GM12878 (cell line): ENCODE measurements at regions of chr10 and their contacts with region 1.

Region 1: DNA sequence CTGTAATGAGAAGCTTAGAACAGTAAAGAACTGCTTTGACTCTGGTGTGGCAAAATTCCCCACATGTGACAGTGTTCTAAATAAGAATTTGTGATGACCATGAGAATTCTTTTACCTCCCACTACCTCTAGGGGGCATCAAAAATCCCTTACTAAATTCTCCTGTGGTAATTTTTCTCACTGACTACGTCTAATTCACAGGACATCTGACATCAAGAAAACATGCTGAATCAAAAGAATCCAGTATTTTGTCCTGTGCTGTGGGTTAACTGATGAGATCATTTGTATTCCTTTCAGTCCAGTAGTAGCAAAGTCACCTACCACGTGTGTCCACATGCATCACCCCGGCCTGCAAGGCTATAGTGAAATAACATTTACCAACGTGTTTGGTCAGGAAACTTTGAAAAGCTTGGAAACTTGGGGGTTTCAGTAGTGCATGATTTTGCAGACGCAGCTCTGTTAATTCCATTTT is 103.8 kb downstream of the ATE1 start:
- DNase-seq: no peak
- ATAC-seq: peak; percentile 76
- H3K4me3 ChIP-seq: no peak overlapping the region
- H3K27ac ChIP-seq: no peak overlapping the region
- H3K4me1 ChIP-seq: peaks cover 5% of the 10 kb centered on the region
- H3K27me3 ChIP-seq: no peaks in the 10 kb centered on the region
- CTCF ChIP-seq: peak; percentile 59 to 66 (median 63); a peak in 5 of 6 replicates
- EP300 ChIP-seq: no peak
- POLR2A ChIP-seq: no peak
- RAD21 ChIP-seq: peak; percentile 41

Region 2: DNA sequence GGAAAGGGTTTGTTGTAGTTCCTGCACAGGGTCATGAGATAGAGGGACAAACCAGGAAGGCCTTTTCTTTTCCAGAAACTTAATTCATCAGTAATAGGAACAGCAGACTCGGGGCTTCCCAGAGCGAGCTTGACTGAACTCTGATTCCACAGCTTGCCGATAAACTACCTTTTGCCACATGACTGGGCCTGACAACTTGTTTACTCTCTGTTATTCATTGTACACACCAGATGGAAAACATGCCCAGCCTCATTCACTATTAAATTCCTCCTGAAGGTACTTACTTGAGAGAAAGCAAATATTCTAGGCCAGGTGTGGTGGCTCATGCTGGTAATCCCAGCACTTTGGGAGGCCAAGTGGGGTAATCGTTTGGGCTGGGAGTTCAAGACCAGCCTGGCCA is 148.7 kb before region 1 on chr10:
- CTCF ChIA-PET with region 1: no interaction called
- POLR2A ChIA-PET with region 1: no interaction called
- RAD21 ChIA-PET with region 1: no interaction called
- SMC1A ChIA-PET with region 1: no interaction called
- in situ Hi-C with region 1: no loop called
- intact Hi-C with region 1: no loop called
- DNase-seq: no peak
- ATAC-seq: no peak
- H3K4me3 ChIP-seq: no peak overlapping the region
- H3K27ac ChIP-seq: no peak overlapping the region
- H3K4me1 ChIP-seq: peaks cover 3% of the 10 kb centered on the region; the same call in 1 of the 2 replicates
- H3K27me3 ChIP-seq: no peaks in the 10 kb centered on the region
- CTCF ChIP-seq: no peak
- EP300 ChIP-seq: no peak
- POLR2A ChIP-seq: no peak
- RAD21 ChIP-seq: no peak

Region 3: GRCh38 chr10:121804460-121804859 is 19.6 kb before region 1 on chr10:
- CTCF ChIA-PET with region 1: interaction called, 37 read pairs
- POLR2A ChIA-PET with region 1: no interaction called
- RAD21 ChIA-PET with region 1: no interaction called
- SMC1A ChIA-PET with region 1: no interaction called
- in situ Hi-C with region 1: no loop called
- intact Hi-C with region 1: no loop called
- DNase-seq: no peak
- ATAC-seq: no peak
- H3K4me3 ChIP-seq: no peak overlapping the region
- H3K27ac ChIP-seq: no peak overlapping the region
- H3K4me1 ChIP-seq: no peaks in the 10 kb centered on the region
- H3K27me3 ChIP-seq: no peaks in the 10 kb centered on the region
- CTCF ChIP-seq: no peak
- EP300 ChIP-seq: no peak
- POLR2A ChIP-seq: no peak
- RAD21 ChIP-seq: no peak

Region 4: GRCh38 chr10:121813211-121813815 is 10.7 kb before region 1 on chr10:
- CTCF ChIA-PET with region 1: interaction called, 29 read pairs
- POLR2A ChIA-PET with region 1: no interaction called
- RAD21 ChIA-PET with region 1: interaction called, 3 read pairs
- SMC1A ChIA-PET with region 1: interaction called, 6 read pairs
- in situ Hi-C with region 1: no loop called
- intact Hi-C with region 1: no loop called
- DNase-seq: no peak
- ATAC-seq: no peak
- H3K4me3 ChIP-seq: no peak overlapping the region
- H3K27ac ChIP-seq: no peak overlapping the region
- H3K4me1 ChIP-seq: no peaks in the 10 kb centered on the region
- H3K27me3 ChIP-seq: no peaks in the 10 kb centered on the region
- CTCF ChIP-seq: no peak
- EP300 ChIP-seq: no peak
- POLR2A ChIP-seq: no peak
- RAD21 ChIP-seq: no peak

Region 5: GRCh38 chr10:121838149-121838548 is 14.1 kb after region 1 on chr10:
- CTCF ChIA-PET with region 1: interaction called, 35 read pairs
- POLR2A ChIA-PET with region 1: interaction called, 4 read pairs
- RAD21 ChIA-PET with region 1: no interaction called
- SMC1A ChIA-PET with region 1: interaction called, 11 read pairs
- in situ Hi-C with region 1: no loop called
- intact Hi-C with region 1: no loop called
- DNase-seq: no peak
- ATAC-seq: no peak
- H3K4me3 ChIP-seq: no peak overlapping the region
- H3K27ac ChIP-seq: no peak overlapping the region
- H3K4me1 ChIP-seq: no peaks in the 10 kb centered on the region
- H3K27me3 ChIP-seq: no peaks in the 10 kb centered on the region
- CTCF ChIP-seq: no peak
- EP300 ChIP-seq: no peak
- POLR2A ChIP-seq: no peak
- RAD21 ChIP-seq: no peak

Region 6: GRCh38 chr10:121880895-121881294 is 56.9 kb after region 1 on chr10:
- CTCF ChIA-PET with region 1: interaction called, 43 read pairs
- POLR2A ChIA-PET with region 1: no interaction called
- RAD21 ChIA-PET with region 1: interaction called, 27 read pairs
- SMC1A ChIA-PET with region 1: interaction called, 30 read pairs
- in situ Hi-C with region 1: no loop called
- intact Hi-C with region 1: loop called (anchors 5 kb)
- DNase-seq: no peak
- ATAC-seq: peak; percentile 38; the same call in 1 of the 3 replicates
- H3K4me3 ChIP-seq: no peak overlapping the region
- H3K27ac ChIP-seq: no peak overlapping the region
- H3K4me1 ChIP-seq: no peaks in the 10 kb centered on the region
- H3K27me3 ChIP-seq: no peaks in the 10 kb centered on the region
- CTCF ChIP-seq: no peak
- EP300 ChIP-seq: no peak
- POLR2A ChIP-seq: no peak
- RAD21 ChIP-seq: no peak

Region 7: DNA sequence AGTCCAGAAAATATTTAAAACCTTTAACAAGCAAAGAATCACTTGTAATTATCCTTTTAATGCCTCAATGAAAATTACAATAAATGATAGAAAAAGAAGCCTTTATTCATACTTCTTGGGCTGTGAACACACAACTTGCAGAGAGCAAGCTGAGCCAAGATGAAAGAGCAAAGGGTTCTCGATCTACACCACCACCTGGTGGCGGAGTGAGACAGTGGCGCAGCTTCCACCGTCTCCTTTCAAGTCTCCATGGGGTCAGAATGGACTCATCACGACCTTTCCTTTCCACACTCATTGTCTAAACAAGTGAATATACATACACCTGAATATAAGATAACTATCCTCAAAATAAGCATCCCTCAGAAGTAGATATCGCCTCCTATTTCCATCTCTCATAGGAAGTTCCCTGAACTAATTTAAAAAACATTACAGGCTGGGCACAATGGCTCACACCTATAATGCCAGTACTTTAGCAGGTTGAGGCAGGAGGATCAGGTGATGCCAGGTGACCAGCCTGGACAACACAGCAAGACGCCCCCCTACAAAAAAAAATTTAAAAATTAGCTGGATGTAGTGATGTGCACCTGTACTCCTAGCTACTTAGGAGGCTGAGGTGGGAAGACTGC is 63.1 kb after region 1 on chr10:
- CTCF ChIA-PET with region 1: interaction called, 43 read pairs
- POLR2A ChIA-PET with region 1: no interaction called
- RAD21 ChIA-PET with region 1: interaction called, 27 read pairs
- SMC1A ChIA-PET with region 1: interaction called, 30 read pairs
- in situ Hi-C with region 1: no loop called
- intact Hi-C with region 1: loop called (anchors 5 kb)
- DNase-seq: no peak
- ATAC-seq: peak; percentile 88
- H3K4me3 ChIP-seq: no peak overlapping the region
- H3K27ac ChIP-seq: no peak overlapping the region
- H3K4me1 ChIP-seq: no peaks in the 10 kb centered on the region
- H3K27me3 ChIP-seq: no peaks in the 10 kb centered on the region
- CTCF ChIP-seq: peak; percentile 65 to 68 (median 67); a peak in 5 of 6 replicates
- EP300 ChIP-seq: no peak
- POLR2A ChIP-seq: no peak
- RAD21 ChIP-seq: peak; percentile 54